ENCODE measurements at regions of chr1 and their contacts with region 1.

Region 1: DNA sequence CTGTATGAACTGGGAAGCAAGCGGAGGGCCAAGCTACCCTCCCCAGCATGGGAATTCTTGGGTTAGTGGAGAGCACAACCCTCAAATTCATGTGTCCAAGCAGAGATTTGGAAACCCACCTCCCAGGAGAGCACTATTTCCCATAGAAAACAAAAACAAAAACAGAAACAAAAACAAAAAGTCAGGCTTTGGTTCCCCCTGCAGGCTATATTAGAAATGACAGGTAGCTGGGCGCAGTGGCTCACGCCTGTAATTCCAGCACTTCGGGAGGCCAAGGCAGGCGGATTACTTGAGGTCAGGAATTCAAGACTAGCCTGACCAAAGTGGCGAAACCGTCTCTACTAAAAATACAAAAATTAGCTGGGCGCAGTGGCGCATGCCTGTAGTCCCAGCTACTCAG is 10.8 kb downstream of the MINDY1 start:
- DNase-seq: peak; percentile 56
- H3K4me3 Mint-ChIP-seq: no peak overlapping the region
- H3K27ac Mint-ChIP-seq: no peak overlapping the region
- H3K4me1 Mint-ChIP-seq: peaks cover 5% of the 10 kb centered on the region
- H3K27me3 Mint-ChIP-seq: no peaks in the 10 kb centered on the region
- CTCF ChIP-seq: peak; percentile 96

Region 2: GRCh38 chr1:150621497-150622302 is 374.2 kb before region 1 on chr1:
- CTCF ChIA-PET with region 1: interaction called, 20 read pairs
- POLR2A ChIA-PET with region 1: no interaction called
- intact Hi-C with region 1: loop called (anchors 5 kb)
- DNase-seq: peak; percentile 79
- H3K4me3 Mint-ChIP-seq: no peak overlapping the region
- H3K27ac Mint-ChIP-seq: peak overlapping the region; percentile 33
- H3K4me1 Mint-ChIP-seq: peaks cover 62% of the 10 kb centered on the region
- H3K27me3 Mint-ChIP-seq: no peaks in the 10 kb centered on the region
- CTCF ChIP-seq: peak; percentile 83

Region 3: DNA sequence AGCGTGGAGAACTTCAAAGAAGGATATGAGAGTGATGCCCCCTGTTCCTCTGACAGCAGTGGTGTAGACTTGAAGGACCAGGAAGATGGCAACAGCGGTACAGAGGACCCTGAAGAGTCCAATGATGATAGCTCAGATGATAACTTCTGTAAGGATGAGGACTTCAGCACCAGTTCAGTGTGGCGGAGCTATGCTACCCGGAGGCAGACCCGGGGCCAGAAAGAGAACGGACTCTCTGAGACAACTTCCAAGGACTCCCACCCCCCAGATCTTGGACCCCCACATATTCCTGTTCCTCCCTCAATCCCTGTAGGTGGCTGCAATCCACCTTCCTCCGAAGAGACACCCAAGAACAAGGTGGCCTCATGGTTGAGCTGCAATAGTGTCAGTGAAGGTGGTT is 35.2 kb before region 1 on chr1:
- CTCF ChIA-PET with region 1: interaction called, 30 read pairs
- POLR2A ChIA-PET with region 1: interaction called, 4 read pairs
- intact Hi-C with region 1: no loop called
- DNase-seq: no peak
- H3K4me3 Mint-ChIP-seq: no peak overlapping the region
- H3K27ac Mint-ChIP-seq: no peak overlapping the region
- H3K4me1 Mint-ChIP-seq: no peaks in the 10 kb centered on the region
- H3K27me3 Mint-ChIP-seq: no peaks in the 10 kb centered on the region
- CTCF ChIP-seq: no peak

Region 4: DNA sequence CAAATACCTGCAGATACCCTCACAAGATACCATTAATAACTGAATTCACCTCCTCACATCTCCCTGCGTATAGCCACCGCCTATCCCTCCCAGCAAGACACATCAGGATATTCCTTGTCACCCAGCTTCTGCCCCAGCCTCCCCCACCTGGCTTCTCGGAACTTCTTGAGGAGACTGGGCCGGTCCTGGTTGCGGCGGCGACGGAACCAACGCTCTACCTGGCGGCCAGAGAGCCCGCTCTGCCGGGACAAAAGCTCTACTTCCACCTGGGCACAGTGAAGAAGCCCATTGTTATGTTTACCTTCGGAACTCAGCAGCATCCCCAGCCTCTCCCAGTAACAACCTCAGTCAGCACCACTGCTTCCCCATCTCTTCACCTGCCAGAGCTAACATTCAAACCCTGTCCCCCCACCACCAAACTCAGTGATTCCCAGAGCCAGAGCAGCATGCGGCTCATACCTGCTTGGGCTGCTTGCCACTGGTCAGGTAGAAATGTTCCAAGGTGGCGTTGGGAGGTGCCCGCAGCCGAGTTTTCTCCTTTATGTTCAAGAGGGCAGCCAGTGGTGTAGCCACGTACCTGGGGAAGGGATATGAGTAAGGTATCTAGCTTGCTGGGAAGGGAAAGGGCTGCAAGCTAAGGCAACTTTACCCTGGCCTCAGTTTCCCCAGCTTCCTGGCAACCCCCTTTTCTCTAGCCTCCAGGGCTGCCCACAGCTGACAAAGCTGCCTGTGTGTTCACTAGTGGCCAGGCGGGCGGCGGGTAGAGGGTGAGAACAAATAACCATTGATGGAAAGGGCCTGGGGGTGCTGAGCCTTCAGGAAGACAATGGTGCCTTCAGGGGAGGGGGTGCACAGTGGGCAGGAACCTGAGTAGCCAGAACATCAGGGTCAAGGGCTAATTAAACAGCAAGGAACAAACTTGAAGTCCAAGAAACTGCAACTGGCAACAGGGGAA is 27.7 kb before region 1 on chr1:
- CTCF ChIA-PET with region 1: interaction called, 35 read pairs
- POLR2A ChIA-PET with region 1: interaction called, 4 read pairs
- intact Hi-C with region 1: no loop called
- DNase-seq: no peak
- H3K4me3 Mint-ChIP-seq: no peak overlapping the region
- H3K27ac Mint-ChIP-seq: peak overlapping the region; percentile 36
- H3K4me1 Mint-ChIP-seq: peaks cover 35% of the 10 kb centered on the region
- H3K27me3 Mint-ChIP-seq: no peaks in the 10 kb centered on the region
- CTCF ChIP-seq: no peak

Region 5: GRCh38 chr1:150973826-150974579 is 21.9 kb before region 1 on chr1:
- CTCF ChIA-PET with region 1: interaction called, 302 read pairs
- POLR2A ChIA-PET with region 1: interaction called, 10 read pairs
- intact Hi-C with region 1: no loop called
- DNase-seq: peak; percentile 48
- H3K4me3 Mint-ChIP-seq: peak overlapping the region; percentile 85
- H3K27ac Mint-ChIP-seq: peak overlapping the region; percentile 96
- H3K4me1 Mint-ChIP-seq: peaks cover 43% of the 10 kb centered on the region
- H3K27me3 Mint-ChIP-seq: no peaks in the 10 kb centered on the region
- CTCF ChIP-seq: no peak

Region 6: DNA sequence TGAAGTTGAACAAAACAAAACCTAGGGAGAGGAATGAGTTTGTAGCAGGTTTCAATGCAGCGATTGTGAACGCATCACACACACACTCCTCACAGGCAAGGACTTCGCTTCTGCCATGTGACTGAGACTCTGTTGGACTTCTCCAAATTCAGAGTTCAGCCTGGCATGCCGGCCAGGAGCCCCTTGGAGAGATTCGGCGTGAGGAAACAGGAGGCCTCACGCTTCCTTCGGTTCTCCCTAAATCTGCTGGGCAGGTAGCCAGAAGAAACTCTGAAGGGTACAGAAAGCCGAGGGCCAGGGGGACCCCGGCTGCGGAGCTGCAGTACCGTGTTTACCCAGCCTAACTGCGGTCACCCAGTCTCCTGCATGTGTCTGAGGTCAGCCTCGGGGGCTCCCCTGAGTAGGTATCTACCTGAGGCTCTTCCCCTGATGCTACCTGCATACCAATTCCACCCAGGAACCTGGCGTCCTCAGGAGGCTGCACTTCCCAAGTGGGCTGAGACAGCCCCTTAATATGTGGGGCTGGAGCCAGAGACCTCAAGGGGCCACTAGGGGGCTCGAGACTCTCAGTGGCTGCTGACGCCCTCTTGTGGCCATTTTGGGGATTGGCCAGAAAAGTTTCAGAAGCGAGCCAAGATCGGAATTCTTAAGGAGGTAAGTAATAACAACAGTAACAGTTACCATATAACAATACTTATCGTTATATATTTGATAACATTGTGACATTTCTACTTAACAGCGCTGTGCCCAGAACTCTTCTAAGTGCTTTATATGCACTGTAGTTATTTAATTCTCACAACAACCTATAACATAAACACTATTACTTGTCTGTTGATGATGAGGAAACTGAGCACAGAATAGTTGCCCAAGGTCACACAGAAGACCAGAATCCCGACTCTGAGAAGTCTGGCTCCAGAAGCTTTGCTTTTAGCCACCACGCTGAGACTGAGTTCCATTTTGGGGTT is 16.5 kb before region 1 on chr1:
- CTCF ChIA-PET with region 1: interaction called, 302 read pairs
- POLR2A ChIA-PET with region 1: interaction called, 20 read pairs
- intact Hi-C with region 1: no loop called
- DNase-seq: peak; percentile 95
- H3K4me3 Mint-ChIP-seq: no peak overlapping the region
- H3K27ac Mint-ChIP-seq: no peak overlapping the region
- H3K4me1 Mint-ChIP-seq: peaks cover 32% of the 10 kb centered on the region
- H3K27me3 Mint-ChIP-seq: no peaks in the 10 kb centered on the region
- CTCF ChIP-seq: peak; percentile 100

Region 7: DNA sequence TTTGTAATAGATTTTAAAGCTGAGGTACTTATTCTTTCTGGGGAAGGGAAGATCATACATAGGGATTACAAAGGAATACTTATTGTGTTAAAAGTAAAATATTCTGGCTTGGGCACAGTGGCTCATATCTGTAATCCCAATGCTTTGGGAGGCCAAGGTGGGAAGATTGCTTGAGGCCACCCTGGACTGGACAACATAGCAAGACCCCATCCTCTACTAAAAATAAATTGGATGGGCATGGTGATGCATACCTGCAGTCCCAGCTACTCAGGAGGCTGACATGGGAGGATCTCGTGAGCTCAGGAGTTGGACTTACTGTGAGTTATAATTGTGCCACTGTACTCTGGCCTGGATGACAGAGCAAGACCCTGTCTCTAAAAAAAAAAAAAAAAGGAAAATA is 102.2 kb after region 1 on chr1:
- CTCF ChIA-PET with region 1: no interaction called
- POLR2A ChIA-PET with region 1: no interaction called
- intact Hi-C with region 1: no loop called
- DNase-seq: no peak
- H3K4me3 Mint-ChIP-seq: no peak overlapping the region
- H3K27ac Mint-ChIP-seq: no peak overlapping the region
- H3K4me1 Mint-ChIP-seq: peaks cover 10% of the 10 kb centered on the region
- H3K27me3 Mint-ChIP-seq: no peaks in the 10 kb centered on the region
- CTCF ChIP-seq: no peak

Region 8: GRCh38 chr1:151156515-151156819 is 160.6 kb after region 1 on chr1 and contains the start of gene TNFAIP8L2:
- CTCF ChIA-PET with region 1: interaction called, 12 read pairs
- POLR2A ChIA-PET with region 1: interaction called, 3 read pairs
- intact Hi-C with region 1: no loop called
- DNase-seq: no peak
- H3K4me3 Mint-ChIP-seq: no peak within 1 kb of the TSS
- H3K27ac Mint-ChIP-seq: no peak within 1 kb of the TSS
- H3K4me1 Mint-ChIP-seq: peaks cover 12% of the 10 kb centered on the region
- H3K27me3 Mint-ChIP-seq: no peaks in the 10 kb centered on the region
- CTCF ChIP-seq: no peak
- total RNA-seq, gene TNFAIP8L2: not detected in 2 replicates

Measured in MCF 10A (cell line).